Upper lobe of right lung (tissue), 1 donor: ENCODE measurements at regions of chr1 and their contacts with region 1.

Region 1: GRCh38 chr1:32247983-32248889 is 1.2 kb downstream of the FAM167B start:
- DNase-seq: peak; percentile 92
- ATAC-seq: peak; percentile 91
- H3K4me3 ChIP-seq: peak overlapping the region; percentile 41
- H3K27ac ChIP-seq: peak overlapping the region; percentile 75
- H3K4me1 ChIP-seq: peaks cover 45% of the 10 kb centered on the region
- H3K27me3 ChIP-seq: no peaks in the 10 kb centered on the region
- CTCF ChIP-seq: peak; percentile 82

Region 2: GRCh38 chr1:32291708-32292492 is 43.7 kb after region 1 on chr1 and contains the start of gene HDAC1:
- intact Hi-C with region 1: loop called (anchors 10 kb)
- DNase-seq: peak; percentile 99
- ATAC-seq: peak; percentile 99
- H3K4me3 ChIP-seq: peak within 1 kb of the TSS; percentile 92
- H3K27ac ChIP-seq: peak within 1 kb of the TSS; percentile 83
- H3K4me1 ChIP-seq: peaks cover 14% of the 10 kb centered on the region
- H3K27me3 ChIP-seq: no peaks in the 10 kb centered on the region
- CTCF ChIP-seq: no peak
- total RNA-seq, gene HDAC1: 71.2 TPM

Region 3: GRCh38 chr1:32438136-32438535 is 189.9 kb after region 1 on chr1:
- intact Hi-C with region 1: no loop called
- DNase-seq: no peak
- ATAC-seq: no peak
- H3K4me3 ChIP-seq: no peak overlapping the region
- H3K27ac ChIP-seq: no peak overlapping the region
- H3K4me1 ChIP-seq: no peaks in the 10 kb centered on the region
- H3K27me3 ChIP-seq: peaks cover 4% of the 10 kb centered on the region
- CTCF ChIP-seq: no peak